Breast epithelium (tissue), 4 donors: ENCODE measurements at regions of chr3 and their contacts with region 1.

Region 1: GRCh38 chr3:70120357-70121121 is 121.0 kb downstream of the SAMMSON start:
- DNase-seq: peak in 1 of 2 donors; percentile 66
- H3K4me3 ChIP-seq: no peak overlapping the region
- H3K27ac ChIP-seq: no peak overlapping the region
- H3K4me1 ChIP-seq: no peaks in the 10 kb centered on the region
- H3K27me3 ChIP-seq: no peaks in the 10 kb centered on the region
- CTCF ChIP-seq: peak in 2 of 3 donors; percentile 31 to 43
- POLR2A ChIP-seq: no peak

Region 2: DNA sequence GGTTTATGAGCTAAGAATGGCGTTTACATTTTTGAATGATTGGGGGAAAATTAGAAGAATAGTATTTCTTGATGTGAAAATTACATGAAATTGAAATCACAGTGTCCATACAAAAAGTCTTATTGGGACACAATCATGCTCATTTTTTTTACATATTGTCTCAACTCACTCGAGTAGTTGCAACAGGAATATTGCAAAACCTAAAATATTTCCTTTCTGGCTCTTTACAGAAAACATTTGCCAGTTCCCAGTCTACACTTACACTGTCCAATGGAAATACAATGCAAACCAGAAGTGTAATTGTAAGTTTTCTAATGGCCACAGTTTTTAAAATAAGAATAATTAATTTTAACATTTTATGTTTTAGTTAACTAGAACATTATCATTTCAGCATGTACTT is 16.8 kb after region 1 on chr3:
- intact Hi-C with region 1: loop called (anchors 1 kb)
- DNase-seq: no peak
- H3K4me3 ChIP-seq: no peak overlapping the region
- H3K27ac ChIP-seq: no peak overlapping the region
- H3K4me1 ChIP-seq: no peaks in the 10 kb centered on the region
- H3K27me3 ChIP-seq: no peaks in the 10 kb centered on the region
- CTCF ChIP-seq: no peak
- POLR2A ChIP-seq: no peak